Activated naive CD4-positive, alpha-beta T cell treated with anti-CD3 and anti-CD28 coated beads for 36 hours (primary cell): ENCODE measurements at regions of chr7 and their contacts with region 1.

Region 1: DNA sequence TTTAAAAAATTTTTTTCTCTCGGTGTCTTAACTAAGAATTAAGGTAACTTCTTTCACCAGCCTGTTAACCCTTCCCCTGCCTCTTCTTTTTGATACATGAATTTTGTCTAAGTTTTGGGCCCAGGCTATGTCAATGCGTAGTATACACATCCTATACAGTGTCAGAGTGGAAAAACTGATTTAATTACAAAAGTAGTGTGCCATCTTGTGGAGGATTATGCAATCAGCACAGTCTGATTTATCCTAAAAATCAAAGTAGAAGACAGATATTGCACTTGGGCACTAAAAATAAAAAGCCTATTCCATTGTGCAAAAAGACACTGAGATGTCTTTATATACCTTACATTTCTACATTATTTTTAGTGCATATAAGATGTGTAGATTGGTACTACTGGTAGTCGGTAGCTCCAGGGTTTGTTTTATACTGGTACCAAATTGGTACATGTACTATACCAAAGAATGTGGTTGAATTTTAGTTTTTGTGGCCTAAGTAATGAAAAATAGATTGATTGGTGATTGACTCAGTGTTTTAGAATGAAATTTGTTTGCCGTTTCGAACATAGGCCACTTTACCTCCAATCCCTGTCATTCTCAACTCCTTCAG is 96.6 kb downstream of the MKLN1 start:
- DNase-seq: peak; percentile 8
- H3K4me3 Mint-ChIP-seq: no peak overlapping the region
- H3K27ac Mint-ChIP-seq: no peak overlapping the region
- H3K4me1 Mint-ChIP-seq: peaks cover 13% of the 10 kb centered on the region
- H3K27me3 Mint-ChIP-seq: no peaks in the 10 kb centered on the region

Region 2: GRCh38 chr7:130896898-130897514 is 527.3 kb before region 1 on chr7:
- CTCF ChIA-PET with region 1: no interaction called
- intact Hi-C with region 1: loop called (anchors 5 kb)
- DNase-seq: peak; percentile 85
- H3K4me3 Mint-ChIP-seq: no peak overlapping the region
- H3K27ac Mint-ChIP-seq: peak overlapping the region; percentile 85
- H3K4me1 Mint-ChIP-seq: peaks cover 88% of the 10 kb centered on the region
- H3K27me3 Mint-ChIP-seq: no peaks in the 10 kb centered on the region

Region 3: DNA sequence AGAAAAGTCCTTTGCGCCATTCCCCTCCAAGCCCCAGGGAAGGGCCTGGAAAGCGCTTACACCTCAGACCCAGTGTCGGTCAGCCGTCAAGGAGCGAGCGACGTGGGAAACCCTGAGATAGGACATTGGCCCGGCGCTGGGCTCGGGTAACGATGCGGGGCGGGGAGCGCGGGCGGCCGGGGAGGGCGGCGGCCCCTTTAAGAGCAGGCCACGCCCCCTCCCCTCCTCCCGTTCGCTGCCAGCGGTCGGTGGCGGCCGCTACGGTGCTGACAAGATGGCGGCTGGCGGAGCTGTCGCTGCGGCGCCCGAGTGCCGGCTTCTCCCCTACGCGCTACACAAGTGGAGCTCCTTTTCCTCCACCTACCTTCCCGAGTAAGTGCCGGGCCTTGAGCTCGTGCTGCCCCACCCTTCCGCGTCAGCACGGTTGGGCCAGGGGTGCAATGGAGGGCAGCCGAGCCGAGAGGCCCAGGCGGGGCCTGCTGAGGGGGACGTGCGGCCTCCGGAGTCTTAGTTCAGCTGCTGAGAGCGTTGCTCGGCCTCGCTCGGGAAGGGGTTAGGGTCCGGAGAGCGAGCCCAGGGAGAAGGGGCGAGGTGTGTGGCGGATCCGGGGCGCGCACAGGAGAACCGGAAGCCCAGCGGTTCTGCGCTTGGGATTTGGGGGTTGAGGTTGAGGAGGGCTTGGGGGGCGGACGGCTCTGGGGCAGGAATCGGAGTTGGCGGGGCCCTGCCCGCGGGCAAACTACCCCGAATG is 96.5 kb before region 1 on chr7 and contains the start of gene MKLN1:
- CTCF ChIA-PET with region 1: no interaction called
- intact Hi-C with region 1: loop called (anchors 2 kb)
- DNase-seq: peak; percentile 90
- H3K4me3 Mint-ChIP-seq: peak within 1 kb of the TSS; percentile 98
- H3K27ac Mint-ChIP-seq: peak within 1 kb of the TSS; percentile 96
- H3K4me1 Mint-ChIP-seq: peaks cover 54% of the 10 kb centered on the region
- H3K27me3 Mint-ChIP-seq: no peaks in the 10 kb centered on the region
- total RNA-seq, gene MKLN1: 29.8 to 34.9 TPM